ENCODE measurements at regions of chr11 and their contacts with region 1.

Region 1: GRCh38 chr11:75388386-75389275 is 10.7 kb upstream of the RPS3 start:
- DNase-seq: no peak
- ATAC-seq: peak; percentile 92
- H3K4me3 ChIP-seq: no peak overlapping the region
- H3K27ac ChIP-seq: no peak overlapping the region
- H3K4me1 ChIP-seq: peaks cover 3% of the 10 kb centered on the region; the same call in 1 of the 2 replicates
- H3K27me3 ChIP-seq: no peaks in the 10 kb centered on the region; a peak in 1 of 4 replicates
- CTCF ChIP-seq: peak; percentile 77 to 92 (median 80)
- EP300 ChIP-seq: no peak
- POLR2A ChIP-seq: no peak
- RAD21 ChIP-seq: peak; percentile 77

Region 2: GRCh38 chr11:75328426-75329277 is 60.0 kb before region 1 on chr11:
- CTCF ChIA-PET with region 1: interaction called, 126 read pairs
- POLR2A ChIA-PET with region 1: no interaction called
- RAD21 ChIA-PET with region 1: interaction called, 7 read pairs
- SMC1A ChIA-PET with region 1: interaction called, 34 read pairs
- in situ Hi-C with region 1: loop called (anchors 5 kb)
- intact Hi-C with region 1: loop called (anchors 1 kb)
- DNase-seq: peak; percentile 69
- ATAC-seq: peak; percentile 84
- H3K4me3 ChIP-seq: no peak overlapping the region
- H3K27ac ChIP-seq: peak overlapping the region; percentile 24; the same call in 1 of the 2 replicates
- H3K4me1 ChIP-seq: peaks cover 14% of the 10 kb centered on the region
- H3K27me3 ChIP-seq: no peaks in the 10 kb centered on the region
- CTCF ChIP-seq: peak; percentile 55 to 80 (median 65)
- EP300 ChIP-seq: no peak
- POLR2A ChIP-seq: no peak
- RAD21 ChIP-seq: peak; percentile 81

Region 3: GRCh38 chr11:75351791-75352587 is 36.6 kb before region 1 on chr11:
- CTCF ChIA-PET with region 1: interaction called, 8 read pairs
- POLR2A ChIA-PET with region 1: no interaction called
- RAD21 ChIA-PET with region 1: interaction called, 10 read pairs
- SMC1A ChIA-PET with region 1: interaction called, 3 read pairs
- in situ Hi-C with region 1: no loop called
- intact Hi-C with region 1: no loop called
- DNase-seq: no peak
- ATAC-seq: peak; percentile 75
- H3K4me3 ChIP-seq: peak overlapping the region; percentile 73
- H3K27ac ChIP-seq: no peak overlapping the region
- H3K4me1 ChIP-seq: peaks cover 11% of the 10 kb centered on the region; the same call in 1 of the 2 replicates
- H3K27me3 ChIP-seq: peaks cover 0 to 4% of the 10 kb centered on the region in 2 experiments; a peak in 1 of 4 replicates
- CTCF ChIP-seq: 0 out of 6 replicates have a peak, but pooled peaks of 1 of the 3 experiments have one; percentile 5
- EP300 ChIP-seq: no peak
- POLR2A ChIP-seq: peak; percentile 51; the same call in 1 of the 2 replicates
- RAD21 ChIP-seq: no peak

Region 4: DNA sequence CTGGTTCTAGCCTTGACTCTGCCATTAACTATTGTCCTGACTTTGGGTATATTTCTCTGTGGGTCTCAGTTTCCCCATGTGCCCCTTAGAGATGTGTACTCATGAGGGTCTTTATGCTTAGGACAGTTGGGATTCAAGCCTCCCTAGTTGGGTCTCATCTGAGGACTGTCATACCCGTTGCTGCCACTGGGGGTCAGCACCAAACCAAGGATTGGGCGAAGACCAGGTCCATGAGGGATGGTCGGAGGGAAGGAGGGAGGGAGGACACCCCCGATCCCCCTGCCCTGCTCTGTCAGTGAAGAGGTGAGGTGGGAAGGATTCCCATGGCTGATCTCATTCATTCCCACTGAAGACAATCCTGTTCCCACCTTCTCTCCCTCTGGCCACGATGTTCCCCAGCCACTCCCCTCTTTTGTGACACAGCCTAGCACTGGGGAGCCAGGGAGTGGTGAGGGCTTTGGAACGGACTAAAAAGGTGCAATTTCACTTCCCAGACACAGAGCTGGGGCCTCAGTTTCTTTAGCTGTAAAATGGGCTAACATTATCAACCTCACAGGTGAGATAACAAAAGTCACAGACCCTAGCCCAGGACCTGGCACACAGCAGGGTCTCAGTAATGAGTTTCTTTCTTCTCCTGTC is 56.8 kb after region 1 on chr11:
- CTCF ChIA-PET with region 1: interaction called, 37 read pairs
- POLR2A ChIA-PET with region 1: no interaction called
- RAD21 ChIA-PET with region 1: interaction called, 5 read pairs
- SMC1A ChIA-PET with region 1: interaction called, 7 read pairs
- in situ Hi-C with region 1: no loop called
- intact Hi-C with region 1: loop called (anchors 1 kb)
- DNase-seq: peak; percentile 19
- ATAC-seq: peak; percentile 91
- H3K4me3 ChIP-seq: no peak overlapping the region
- H3K27ac ChIP-seq: no peak overlapping the region
- H3K4me1 ChIP-seq: no peaks in the 10 kb centered on the region
- H3K27me3 ChIP-seq: no peaks in the 10 kb centered on the region
- CTCF ChIP-seq: peak; percentile 93 to 99 (median 97); a peak in 5 of 6 replicates
- EP300 ChIP-seq: no peak
- POLR2A ChIP-seq: no peak
- RAD21 ChIP-seq: peak; percentile 100

Region 5: GRCh38 chr11:75532200-75533048 is 143.8 kb after region 1 on chr11:
- CTCF ChIA-PET with region 1: interaction called, 68 read pairs
- POLR2A ChIA-PET with region 1: no interaction called
- RAD21 ChIA-PET with region 1: interaction called, 31 read pairs
- SMC1A ChIA-PET with region 1: interaction called, 43 read pairs
- in situ Hi-C with region 1: no loop called
- intact Hi-C with region 1: loop called (anchors 1 kb)
- DNase-seq: peak; percentile 40
- ATAC-seq: peak; percentile 54
- H3K4me3 ChIP-seq: no peak overlapping the region
- H3K27ac ChIP-seq: no peak overlapping the region
- H3K4me1 ChIP-seq: peaks cover 17% of the 10 kb centered on the region
- H3K27me3 ChIP-seq: no peaks in the 10 kb centered on the region
- CTCF ChIP-seq: peak; percentile 77 to 94 (median 85); a peak in 5 of 6 replicates
- EP300 ChIP-seq: no peak
- POLR2A ChIP-seq: no peak
- RAD21 ChIP-seq: peak; percentile 98